AG04449 (cell line): ENCODE measurements at regions of chr4 and their contacts with region 1.

Region 1: GRCh38 chr4:173025131-173025530 is 143.5 kb upstream of the GALNT7 start:
- DNase-seq: no peak
- H3K4me3 ChIP-seq: no peak overlapping the region
- CTCF ChIP-seq: peak; percentile 54

Region 2: GRCh38 chr4:172726001-172726423 is 299.1 kb before region 1 on chr4:
- CTCF ChIA-PET with region 1: no interaction called
- POLR2A ChIA-PET with region 1: no interaction called
- DNase-seq: no peak
- H3K4me3 ChIP-seq: no peak overlapping the region
- CTCF ChIP-seq: no peak

Region 3: GRCh38 chr4:172762895-172763294 is 262.2 kb before region 1 on chr4:
- CTCF ChIA-PET with region 1: no interaction called
- POLR2A ChIA-PET with region 1: no interaction called
- DNase-seq: no peak
- H3K4me3 ChIP-seq: no peak overlapping the region
- CTCF ChIP-seq: no peak

Region 4: DNA sequence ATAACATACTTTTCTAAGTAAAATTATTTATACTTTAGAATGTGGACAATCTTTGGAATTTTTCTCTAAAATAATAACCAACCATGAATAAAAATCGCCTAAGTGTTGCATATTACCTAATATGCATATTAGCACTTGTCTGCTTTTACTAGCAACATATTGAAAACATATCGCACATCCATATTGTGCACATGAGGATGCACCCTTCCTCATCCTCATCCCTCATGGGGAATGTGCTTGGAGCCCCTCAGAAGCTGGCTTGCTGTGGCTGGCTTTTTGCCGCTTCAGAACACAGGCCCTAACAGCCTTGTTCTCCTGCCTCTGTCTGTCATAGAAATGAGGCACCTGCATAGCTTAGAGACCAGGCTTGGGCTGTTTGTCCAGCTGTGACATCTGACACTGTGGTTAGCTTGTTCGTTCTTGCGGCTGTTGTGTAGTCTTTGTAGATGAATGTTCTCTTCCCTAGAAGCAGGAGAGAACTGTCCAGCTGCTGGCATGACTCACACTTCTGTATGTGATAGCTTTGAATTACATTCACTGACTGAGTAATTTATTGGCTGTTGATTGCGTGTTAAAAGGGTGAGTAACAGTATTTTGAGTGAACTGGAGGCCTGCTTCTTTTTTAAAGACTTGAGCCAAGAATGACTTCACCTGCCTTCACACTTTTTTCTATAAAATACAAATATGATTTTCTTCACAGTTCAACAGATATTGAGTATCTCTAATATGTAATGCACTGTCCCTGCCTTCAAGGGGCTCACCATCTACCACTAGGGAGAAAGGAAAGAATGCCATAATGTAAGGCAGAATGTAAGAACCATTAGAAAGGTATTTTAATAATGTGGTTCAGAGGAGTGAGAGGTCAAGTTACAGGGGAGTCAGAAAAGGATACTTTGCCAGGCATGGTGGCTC is 227.1 kb after region 1 on chr4:
- CTCF ChIA-PET with region 1: interaction called, 120 read pairs
- POLR2A ChIA-PET with region 1: interaction called, 4 read pairs
- DNase-seq: peak; percentile 93
- H3K4me3 ChIP-seq: no peak overlapping the region
- CTCF ChIP-seq: no peak